GM13976 (cell line): ENCODE measurements at regions of chr16 and their contacts with region 1.

Region 1: GRCh38 chr16:68264128-68265077 is at the start of gene SLC7A6:
- DNase-seq: peak; percentile 92
- CTCF ChIP-seq: peak; percentile 78

Region 2: GRCh38 chr16:67660564-67661028 is 603.8 kb before region 1 on chr16 and contains the start of gene PARD6A:
- in situ Hi-C with region 1: no loop called
- DNase-seq: peak; percentile 100
- CTCF ChIP-seq: no peak

Region 3: DNA sequence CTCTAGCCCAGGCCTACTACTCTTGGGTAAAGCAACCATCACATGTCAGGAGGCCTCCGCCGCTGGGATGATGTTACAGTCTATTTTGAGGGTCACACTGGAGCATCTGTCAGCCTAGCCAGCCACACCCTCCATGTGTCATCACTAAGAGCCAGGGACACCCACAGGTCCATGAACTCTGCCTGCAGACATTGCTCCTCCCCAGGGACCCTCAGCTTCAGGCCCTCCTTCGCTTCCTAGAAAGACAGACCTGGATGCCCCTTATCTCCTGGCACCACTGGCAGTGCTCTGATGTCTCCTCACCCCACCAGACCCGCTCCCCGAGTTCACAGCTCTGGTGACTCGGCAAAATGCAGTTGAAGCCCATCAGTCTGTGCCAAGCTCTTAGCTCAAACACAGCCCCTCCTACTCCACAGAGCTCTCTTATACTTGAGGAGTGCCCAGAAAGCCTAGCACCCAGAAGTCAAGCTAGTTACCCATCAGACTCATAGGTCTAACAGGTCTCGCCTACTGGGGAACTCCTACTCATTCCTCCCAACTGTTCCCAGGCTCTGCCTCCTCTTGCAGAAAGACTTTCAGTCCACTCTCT is 464.0 kb before region 1 on chr16:
- in situ Hi-C with region 1: no loop called
- DNase-seq: no peak
- CTCF ChIP-seq: no peak

Region 4: GRCh38 chr16:67935402-67936123 is 328.8 kb before region 1 on chr16:
- in situ Hi-C with region 1: no loop called
- DNase-seq: peak; percentile 99
- CTCF ChIP-seq: no peak

Region 5: DNA sequence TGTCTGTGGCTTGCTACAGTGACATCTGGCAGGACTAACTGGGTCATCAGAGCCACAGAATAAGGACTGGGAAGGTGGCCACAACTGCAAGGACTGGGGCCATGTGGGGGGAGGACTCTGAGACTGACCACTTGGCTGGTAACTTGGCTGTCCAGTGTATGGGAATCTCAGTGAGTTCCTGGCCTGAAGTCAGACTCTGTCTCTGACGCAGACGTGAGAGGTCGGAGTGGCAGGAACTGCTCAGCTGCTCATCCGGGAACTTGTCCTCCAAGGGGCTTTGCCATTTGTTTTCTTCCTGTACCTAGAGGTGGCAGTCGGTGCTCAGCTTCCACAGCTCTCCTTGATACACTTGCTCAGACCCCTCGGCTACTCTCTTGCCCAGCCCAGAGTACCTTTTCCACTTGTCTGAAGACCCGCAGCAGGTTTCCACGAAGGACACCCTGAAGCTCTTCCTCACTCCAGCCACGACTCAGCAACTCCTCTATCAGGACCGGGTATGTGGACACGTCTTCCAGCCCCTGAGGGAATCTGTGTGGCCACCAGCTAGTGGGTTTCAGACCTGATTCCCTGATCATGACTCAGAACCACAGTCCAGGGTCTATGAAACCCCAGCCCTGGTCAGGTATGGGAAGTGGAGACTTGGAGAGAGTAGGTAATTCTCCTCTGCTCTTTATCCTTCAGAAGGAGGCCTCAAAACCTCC is 276.8 kb before region 1 on chr16:
- in situ Hi-C with region 1: no loop called
- DNase-seq: no peak
- CTCF ChIP-seq: no peak

Region 6: GRCh38 chr16:68332411-68333121 is 68.2 kb after region 1 on chr16:
- in situ Hi-C with region 1: loop called (anchors 5 kb)
- DNase-seq: no peak
- CTCF ChIP-seq: no peak